ENCODE measurements at regions of chr1 and their contacts with region 1.

Region 1: DNA sequence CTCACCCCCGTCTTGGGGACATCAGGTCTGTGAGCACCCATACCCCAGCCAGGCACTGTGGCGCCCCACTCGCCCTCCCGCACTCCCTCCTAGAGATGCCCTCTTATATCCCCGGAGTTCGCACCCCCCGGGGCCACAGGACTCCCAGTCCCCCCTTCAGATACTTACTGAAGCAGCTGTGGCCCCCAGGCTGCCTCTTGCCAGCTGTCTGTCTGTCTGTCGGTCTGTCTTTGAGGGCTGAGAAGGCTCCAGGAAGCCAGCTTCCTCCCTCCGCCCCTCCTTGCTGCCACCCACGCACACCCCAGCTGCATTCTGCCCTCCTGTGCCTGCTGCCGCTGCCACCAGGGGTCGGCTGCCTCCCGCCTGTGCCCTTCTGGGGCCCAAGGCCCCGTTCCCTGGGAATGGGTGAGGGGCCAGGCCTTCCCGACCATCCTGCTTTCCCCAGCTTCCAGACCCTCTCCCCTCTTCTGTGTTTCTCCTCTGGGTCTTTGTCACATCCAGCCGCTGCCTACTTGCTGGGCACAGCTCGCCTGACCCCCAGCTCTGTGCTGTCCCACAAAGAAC is at the start of gene PTPN7:
- DNase-seq: peak; percentile 65 to 90 (median 86)
- ATAC-seq: peak; percentile 67
- H3K4me3 ChIP-seq: peak within 1 kb of the TSS; percentile 66 to 94
- H3K4me3 Mint-ChIP-seq: peak within 1 kb of the TSS; percentile 87
- H3K27ac ChIP-seq: peak within 1 kb of the TSS; percentile 78 to 99
- H3K27ac Mint-ChIP-seq: peak within 1 kb of the TSS; percentile 91
- H3K4me1 ChIP-seq: peaks cover 86% of the 10 kb centered on the region
- H3K4me1 Mint-ChIP-seq: peaks cover 78% of the 10 kb centered on the region
- H3K27me3 ChIP-seq: no peaks in the 10 kb centered on the region
- H3K27me3 Mint-ChIP-seq: no peaks in the 10 kb centered on the region
- CTCF ChIP-seq: peak; percentile 59
- total RNA-seq, gene PTPN7: 106 to 108 TPM

Region 2: GRCh38 chr1:201766131-201766866 is 394.2 kb before region 1 on chr1:
- CTCF ChIA-PET with region 1: no interaction called
- POLR2A ChIA-PET with region 1: no interaction called
- intact Hi-C with region 1: no loop called
- DNase-seq: no peak
- ATAC-seq: no peak
- H3K4me3 ChIP-seq: no peak overlapping the region
- H3K4me3 Mint-ChIP-seq: no peak overlapping the region
- H3K27ac ChIP-seq: no peak overlapping the region
- H3K27ac Mint-ChIP-seq: no peak overlapping the region
- H3K4me1 ChIP-seq: no peaks in the 10 kb centered on the region
- H3K4me1 Mint-ChIP-seq: no peaks in the 10 kb centered on the region
- H3K27me3 ChIP-seq: peaks cover 0 to 2% of the 10 kb centered on the region in 2 experiments
- H3K27me3 Mint-ChIP-seq: peaks cover 10% of the 10 kb centered on the region
- CTCF ChIP-seq: no peak

Region 3: GRCh38 chr1:202112839-202113672 is 47.4 kb before region 1 on chr1:
- CTCF ChIA-PET with region 1: no interaction called
- POLR2A ChIA-PET with region 1: no interaction called
- intact Hi-C with region 1: no loop called
- DNase-seq: no peak
- ATAC-seq: no peak
- H3K4me3 ChIP-seq: no peak overlapping the region
- H3K4me3 Mint-ChIP-seq: no peak overlapping the region
- H3K27ac ChIP-seq: no peak overlapping the region
- H3K27ac Mint-ChIP-seq: no peak overlapping the region
- H3K4me1 ChIP-seq: no peaks in the 10 kb centered on the region
- H3K4me1 Mint-ChIP-seq: no peaks in the 10 kb centered on the region
- H3K27me3 ChIP-seq: no peaks in the 10 kb centered on the region
- H3K27me3 Mint-ChIP-seq: no peaks in the 10 kb centered on the region
- CTCF ChIP-seq: no peak

Region 4: GRCh38 chr1:202135221-202135721 is 25.2 kb before region 1 on chr1:
- CTCF ChIA-PET with region 1: interaction called, 24 read pairs
- POLR2A ChIA-PET with region 1: no interaction called
- intact Hi-C with region 1: no loop called
- DNase-seq: peak in 8 of 9 experiments; percentile 36 to 74 (median 52)
- ATAC-seq: peak; percentile 93
- H3K4me3 ChIP-seq: no peak overlapping the region
- H3K4me3 Mint-ChIP-seq: no peak overlapping the region
- H3K27ac ChIP-seq: no peak overlapping the region
- H3K27ac Mint-ChIP-seq: no peak overlapping the region
- H3K4me1 ChIP-seq: no peaks in the 10 kb centered on the region
- H3K4me1 Mint-ChIP-seq: peaks cover 10% of the 10 kb centered on the region
- H3K27me3 ChIP-seq: no peaks in the 10 kb centered on the region
- H3K27me3 Mint-ChIP-seq: no peaks in the 10 kb centered on the region
- CTCF ChIP-seq: peak; percentile 90

Region 5: GRCh38 chr1:202144402-202145067 is 15.9 kb before region 1 on chr1 and contains the start of gene ARL8A:
- CTCF ChIA-PET with region 1: interaction called, 12 read pairs
- POLR2A ChIA-PET with region 1: interaction called, 15 read pairs
- intact Hi-C with region 1: loop called in 1 of 2 experiments (anchors 1 kb)
- DNase-seq: peak; percentile 35 to 79 (median 66)
- ATAC-seq: peak; percentile 76
- H3K4me3 ChIP-seq: peak within 1 kb of the TSS; percentile 64 to 92
- H3K4me3 Mint-ChIP-seq: peak within 1 kb of the TSS; percentile 92
- H3K27ac ChIP-seq: peak within 1 kb of the TSS; percentile 64 to 82
- H3K27ac Mint-ChIP-seq: peak within 1 kb of the TSS; percentile 94
- H3K4me1 ChIP-seq: peaks cover 22% of the 10 kb centered on the region
- H3K4me1 Mint-ChIP-seq: peaks cover 35% of the 10 kb centered on the region
- H3K27me3 ChIP-seq: no peaks in the 10 kb centered on the region
- H3K27me3 Mint-ChIP-seq: no peaks in the 10 kb centered on the region
- CTCF ChIP-seq: no peak
- total RNA-seq, gene ARL8A: 58.4 to 64.2 TPM

Region 6: DNA sequence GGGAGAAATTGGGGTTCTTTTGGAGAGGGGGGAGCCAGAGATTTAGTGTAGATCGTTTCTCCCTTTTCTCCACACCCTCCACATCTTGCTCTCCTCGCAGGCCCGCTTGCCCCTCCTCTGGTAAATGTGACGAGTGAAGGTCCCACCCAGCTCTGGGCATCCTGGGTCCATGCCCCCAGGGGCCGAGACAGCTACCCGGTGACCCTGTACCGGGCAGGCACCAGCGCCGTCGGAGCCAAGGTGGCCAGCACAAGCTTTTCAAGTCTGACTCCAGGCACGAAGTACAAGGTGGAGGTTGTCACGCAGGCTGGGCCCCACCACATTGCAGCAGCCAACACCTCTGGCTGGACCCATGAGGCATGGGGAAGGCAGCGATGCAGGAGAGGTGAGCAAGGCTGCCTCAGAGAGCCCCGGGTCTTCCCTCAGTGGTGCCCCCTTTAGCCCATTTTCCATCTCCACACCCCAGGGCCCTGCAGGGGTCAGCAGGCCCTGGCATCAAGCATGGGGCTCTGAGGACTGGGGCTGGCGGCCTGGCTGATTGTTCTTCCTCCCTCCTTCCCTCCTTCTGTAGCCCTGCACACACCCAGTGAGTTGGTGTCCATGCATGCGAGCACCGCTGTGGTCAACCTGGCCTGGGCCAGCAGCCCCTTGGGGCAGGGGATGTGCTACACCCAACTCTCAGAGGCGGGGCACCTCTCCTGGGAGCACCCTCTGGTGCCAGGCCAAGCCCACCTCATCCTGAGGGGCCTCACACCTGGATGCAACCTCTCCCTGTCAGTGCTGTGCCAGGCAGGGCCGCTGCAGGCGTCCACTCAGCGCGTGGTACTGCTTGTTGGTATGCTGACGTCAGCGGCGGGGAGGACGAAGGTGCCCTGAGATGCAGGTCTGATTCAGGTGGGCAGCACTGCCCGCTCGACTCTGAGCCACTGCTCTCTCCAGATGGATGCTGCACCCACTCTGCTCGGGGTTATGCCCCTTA is 16.8 kb after region 1 on chr1:
- CTCF ChIA-PET with region 1: interaction called, 20 read pairs
- POLR2A ChIA-PET with region 1: interaction called, 6 read pairs
- intact Hi-C with region 1: no loop called
- DNase-seq: no peak
- ATAC-seq: no peak
- H3K4me3 ChIP-seq: no peak overlapping the region
- H3K4me3 Mint-ChIP-seq: no peak overlapping the region
- H3K27ac ChIP-seq: no peak overlapping the region
- H3K27ac Mint-ChIP-seq: no peak overlapping the region
- H3K4me1 ChIP-seq: no peaks in the 10 kb centered on the region
- H3K4me1 Mint-ChIP-seq: no peaks in the 10 kb centered on the region
- H3K27me3 ChIP-seq: no peaks in the 10 kb centered on the region
- H3K27me3 Mint-ChIP-seq: no peaks in the 10 kb centered on the region
- CTCF ChIP-seq: no peak

Region 7: GRCh38 chr1:202184750-202185460 is 24.4 kb after region 1 on chr1:
- CTCF ChIA-PET with region 1: interaction called, 22 read pairs
- POLR2A ChIA-PET with region 1: no interaction called
- intact Hi-C with region 1: loop called (anchors 1 to 2 kb)
- DNase-seq: peak; percentile 24 to 80 (median 70)
- ATAC-seq: peak; percentile 61
- H3K4me3 ChIP-seq: no peak overlapping the region
- H3K4me3 Mint-ChIP-seq: no peak overlapping the region
- H3K27ac ChIP-seq: no peak overlapping the region
- H3K27ac Mint-ChIP-seq: no peak overlapping the region
- H3K4me1 ChIP-seq: peaks cover 13% of the 10 kb centered on the region
- H3K4me1 Mint-ChIP-seq: peaks cover 13% of the 10 kb centered on the region
- H3K27me3 ChIP-seq: no peaks in the 10 kb centered on the region
- H3K27me3 Mint-ChIP-seq: peaks cover 2% of the 10 kb centered on the region
- CTCF ChIP-seq: peak; percentile 64

Region 8: GRCh38 chr1:202192770-202193613 is 32.5 kb after region 1 on chr1:
- CTCF ChIA-PET with region 1: interaction called, 11 read pairs
- POLR2A ChIA-PET with region 1: interaction called, 3 read pairs
- intact Hi-C with region 1: loop called in 1 of 2 experiments (anchors 2 kb)
- DNase-seq: peak; percentile 30 to 75 (median 62)
- ATAC-seq: peak; percentile 44
- H3K4me3 ChIP-seq: peak overlapping the region in 1 of 2 experiments; percentile 20
- H3K4me3 Mint-ChIP-seq: no peak overlapping the region
- H3K27ac ChIP-seq: no peak overlapping the region
- H3K27ac Mint-ChIP-seq: no peak overlapping the region
- H3K4me1 ChIP-seq: peaks cover 7% of the 10 kb centered on the region
- H3K4me1 Mint-ChIP-seq: peaks cover 15% of the 10 kb centered on the region
- H3K27me3 ChIP-seq: peaks cover 0 to 8% of the 10 kb centered on the region in 2 experiments
- H3K27me3 Mint-ChIP-seq: peaks cover 14% of the 10 kb centered on the region
- CTCF ChIP-seq: peak; percentile 83

Region 9: DNA sequence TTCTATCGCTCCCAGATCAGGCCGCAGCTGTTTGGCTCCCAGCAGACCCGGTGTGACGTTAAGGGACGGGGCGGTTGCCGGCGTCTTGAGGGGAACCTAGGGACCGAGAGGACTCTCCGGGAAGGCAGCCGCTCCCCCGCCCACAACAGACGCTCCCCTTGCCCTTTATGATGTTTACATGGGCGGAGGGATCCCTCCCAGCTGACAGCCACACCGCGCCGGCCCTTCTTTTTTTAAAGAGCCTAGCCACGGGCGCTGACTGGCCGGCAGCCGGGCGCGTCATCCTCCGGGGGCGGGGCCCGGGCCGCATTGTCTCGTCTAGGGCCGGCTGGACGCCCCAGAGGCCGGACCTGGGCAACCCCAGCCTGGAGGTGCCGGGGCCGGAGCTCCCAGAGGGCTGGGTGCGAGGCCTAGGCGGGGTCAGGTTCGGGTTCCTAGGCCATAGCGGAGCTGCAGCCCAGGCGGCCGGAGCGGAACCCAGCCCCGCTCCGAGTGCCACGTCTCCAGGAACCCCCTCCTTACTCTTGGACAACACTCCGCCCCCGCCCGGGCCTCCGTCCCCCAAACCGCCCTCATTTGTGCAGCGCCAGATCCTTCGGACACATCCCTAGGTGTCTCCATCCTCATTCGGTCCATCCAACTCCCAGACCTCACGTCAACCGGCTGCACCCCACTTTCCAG is 650.3 kb after region 1 on chr1 and contains the start of gene PCAT6:
- CTCF ChIA-PET with region 1: no interaction called
- POLR2A ChIA-PET with region 1: no interaction called
- intact Hi-C with region 1: loop called in 1 of 2 experiments (anchors 10 kb)
- DNase-seq: peak; percentile 67 to 93 (median 84)
- ATAC-seq: peak; percentile 67
- H3K4me3 ChIP-seq: peak within 1 kb of the TSS; percentile 80 to 94
- H3K4me3 Mint-ChIP-seq: peak within 1 kb of the TSS; percentile 88
- H3K27ac ChIP-seq: peak within 1 kb of the TSS; percentile 51 to 72
- H3K27ac Mint-ChIP-seq: peak within 1 kb of the TSS; percentile 90
- H3K4me1 ChIP-seq: peaks cover 20% of the 10 kb centered on the region
- H3K4me1 Mint-ChIP-seq: peaks cover 34% of the 10 kb centered on the region
- H3K27me3 ChIP-seq: no peaks in the 10 kb centered on the region
- H3K27me3 Mint-ChIP-seq: no peaks in the 10 kb centered on the region
- CTCF ChIP-seq: no peak
- total RNA-seq, gene PCAT6: 0.92 to 1.6 TPM